IMR-90 (cell line): ENCODE measurements at regions of chr5 and their contacts with region 1.

Region 1: DNA sequence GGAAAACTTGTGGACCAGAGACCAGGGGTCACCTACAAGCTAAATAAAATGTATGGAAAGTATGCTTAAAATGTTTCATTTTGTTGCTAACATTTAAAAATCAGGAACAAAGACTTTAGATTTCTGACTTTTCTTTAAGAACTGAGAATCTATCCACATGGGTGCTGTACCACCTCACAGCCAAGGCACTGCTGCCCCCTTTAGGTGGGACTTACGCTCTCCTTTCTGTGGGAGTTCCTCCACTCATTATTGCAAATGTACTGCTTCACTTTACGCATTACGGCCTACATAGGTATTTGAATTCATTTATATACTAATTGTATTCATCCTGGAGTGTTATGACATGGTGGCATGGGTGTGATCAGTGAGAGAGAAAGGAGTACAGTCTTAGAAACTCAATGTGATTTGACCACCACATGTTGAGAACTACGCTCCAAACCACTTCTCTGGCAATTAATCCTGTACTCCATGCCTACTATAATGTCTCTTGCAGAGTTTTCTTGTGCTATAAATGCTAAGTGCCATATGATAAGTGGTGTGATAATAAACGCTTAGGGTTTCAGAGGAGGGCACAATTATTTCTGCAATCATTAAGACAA is 24.7 kb upstream of the CETN3 start:
- DNase-seq: peak; percentile 45
- ATAC-seq: peak; percentile 85
- H3K4me3 ChIP-seq: no peak overlapping the region
- H3K27ac ChIP-seq: no peak overlapping the region
- H3K4me1 ChIP-seq: no peaks in the 10 kb centered on the region
- H3K27me3 ChIP-seq: peaks cover 1% of the 10 kb centered on the region
- CTCF ChIP-seq: peak; percentile 65
- POLR2A ChIP-seq: no peak
- RAD21 ChIP-seq: peak; percentile 77

Region 2: DNA sequence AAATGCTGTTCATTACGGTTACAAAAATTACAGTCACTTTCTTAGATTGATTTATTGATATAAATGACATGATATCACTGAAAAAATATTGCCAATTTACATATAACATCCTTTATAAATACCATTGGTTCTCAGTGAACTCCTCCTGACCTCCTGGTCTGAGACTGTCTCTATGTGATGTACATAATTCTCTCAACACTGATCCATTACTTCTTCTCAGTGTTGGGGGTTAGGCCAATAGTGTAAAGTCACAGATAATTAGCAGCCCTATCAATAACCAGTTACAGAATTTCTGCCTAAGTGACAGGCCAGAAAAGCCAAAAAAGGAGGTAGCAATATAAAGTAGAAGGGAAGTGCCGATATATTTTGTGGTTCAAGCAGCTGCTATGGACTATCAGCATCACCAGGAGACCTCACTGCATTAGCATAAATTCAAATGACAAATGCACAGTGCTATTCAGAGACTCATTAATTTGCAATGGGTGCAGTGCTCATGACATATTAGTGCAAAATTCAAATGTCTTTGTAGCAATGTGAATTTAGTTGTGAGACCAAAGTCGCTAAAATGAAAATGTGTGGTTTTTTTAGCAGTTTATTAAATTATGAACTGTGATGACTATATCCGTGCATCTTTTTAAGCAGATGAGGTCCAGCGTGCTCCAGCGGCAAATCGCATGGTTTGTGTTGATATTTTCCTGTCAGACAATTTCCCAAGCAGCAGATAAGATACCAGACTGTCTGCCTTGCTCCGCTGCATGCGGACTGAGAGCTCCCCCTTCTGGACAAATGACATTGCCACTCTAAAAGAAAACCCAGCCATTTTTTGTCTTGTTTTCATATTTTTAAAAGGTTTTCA is 169.3 kb before region 1 on chr5:
- CTCF ChIA-PET with region 1: no interaction called
- POLR2A ChIA-PET with region 1: no interaction called
- dilution Hi-C with region 1: no loop called
- in situ Hi-C with region 1: no loop called
- intact Hi-C with region 1: loop called (anchors 5 kb)
- DNase-seq: peak; percentile 61
- ATAC-seq: peak; percentile 83
- H3K4me3 ChIP-seq: no peak overlapping the region
- H3K27ac ChIP-seq: no peak overlapping the region
- H3K4me1 ChIP-seq: no peaks in the 10 kb centered on the region
- H3K27me3 ChIP-seq: no peaks in the 10 kb centered on the region
- CTCF ChIP-seq: peak; percentile 98
- POLR2A ChIP-seq: 0 out of 2 replicates have a peak, but pooled peaks have one; percentile 29
- RAD21 ChIP-seq: peak; percentile 90

Region 3: GRCh38 chr5:90356622-90357021 is 77.6 kb before region 1 on chr5:
- CTCF ChIA-PET with region 1: no interaction called
- POLR2A ChIA-PET with region 1: no interaction called
- dilution Hi-C with region 1: no loop called
- in situ Hi-C with region 1: no loop called
- intact Hi-C with region 1: loop called (anchors 1 kb)
- DNase-seq: no peak
- ATAC-seq: no peak
- H3K4me3 ChIP-seq: no peak overlapping the region
- H3K27ac ChIP-seq: no peak overlapping the region
- H3K4me1 ChIP-seq: no peaks in the 10 kb centered on the region
- H3K27me3 ChIP-seq: no peaks in the 10 kb centered on the region
- CTCF ChIP-seq: no peak
- POLR2A ChIP-seq: no peak
- RAD21 ChIP-seq: no peak

Region 4: DNA sequence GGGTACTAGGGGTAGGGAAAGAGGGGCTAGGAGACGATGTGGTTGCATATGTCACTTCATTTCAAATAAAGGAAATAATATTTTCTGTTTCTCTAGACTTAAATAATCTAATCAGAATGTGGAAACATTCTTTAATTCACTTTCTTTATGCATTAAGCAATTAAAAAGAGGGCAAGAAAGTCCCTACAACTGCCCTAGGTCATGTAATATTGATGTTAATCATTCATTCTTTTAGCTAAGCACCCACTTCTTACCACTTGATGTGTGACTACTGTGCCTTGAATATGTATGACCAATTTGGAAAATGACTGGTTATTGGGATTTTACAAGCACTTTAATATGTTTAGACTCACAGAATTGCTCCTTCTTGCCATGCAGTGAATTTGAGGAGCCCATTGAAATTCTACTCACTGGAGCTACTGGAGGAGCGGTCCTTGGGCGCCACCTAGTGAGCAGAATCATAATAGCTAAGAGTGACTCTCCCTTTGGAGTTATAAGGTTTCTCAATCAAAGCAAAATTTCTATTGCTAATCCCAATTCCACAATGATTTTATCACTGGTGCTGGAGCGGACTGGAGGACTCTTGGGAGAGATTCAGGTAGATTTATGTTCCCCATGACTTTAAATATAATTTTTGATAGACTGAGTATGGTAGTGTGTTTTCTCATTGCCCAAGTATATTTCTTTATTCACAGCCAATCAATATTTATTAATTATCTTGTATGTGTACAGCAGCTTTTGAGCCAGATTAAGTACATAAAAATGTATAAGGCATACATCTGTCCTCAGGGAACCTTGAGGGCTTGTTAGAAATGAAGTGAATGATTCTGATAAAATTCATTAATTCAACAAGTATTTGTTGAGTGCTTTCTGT is 349.5 kb after region 1 on chr5:
- CTCF ChIA-PET with region 1: interaction called, 7 read pairs
- POLR2A ChIA-PET with region 1: no interaction called
- dilution Hi-C with region 1: no loop called
- in situ Hi-C with region 1: no loop called
- intact Hi-C with region 1: loop called (anchors 1 kb)
- DNase-seq: peak; percentile 51
- ATAC-seq: peak; percentile 95
- H3K4me3 ChIP-seq: no peak overlapping the region
- H3K27ac ChIP-seq: no peak overlapping the region
- H3K4me1 ChIP-seq: no peaks in the 10 kb centered on the region
- H3K27me3 ChIP-seq: no peaks in the 10 kb centered on the region
- CTCF ChIP-seq: peak; percentile 87
- POLR2A ChIP-seq: no peak
- RAD21 ChIP-seq: peak; percentile 86

Region 5: GRCh38 chr5:90949469-90950358 is 515.5 kb after region 1 on chr5:
- CTCF ChIA-PET with region 1: no interaction called
- POLR2A ChIA-PET with region 1: no interaction called
- dilution Hi-C with region 1: no loop called
- in situ Hi-C with region 1: no loop called
- intact Hi-C with region 1: no loop called
- DNase-seq: no peak
- ATAC-seq: no peak
- H3K4me3 ChIP-seq: no peak overlapping the region
- H3K27ac ChIP-seq: no peak overlapping the region
- H3K4me1 ChIP-seq: no peaks in the 10 kb centered on the region
- H3K27me3 ChIP-seq: no peaks in the 10 kb centered on the region
- CTCF ChIP-seq: no peak
- POLR2A ChIP-seq: no peak
- RAD21 ChIP-seq: no peak